Activated CD4-positive, alpha-beta T cell treated with anti-CD3 and anti-CD28 coated beads, Interleukin-2, amount 10 ng/mL, durations not matched to agents 24 days and 14 days (primary cell): ENCODE measurements at regions of chr3 and their contacts with region 1.

Region 1: DNA sequence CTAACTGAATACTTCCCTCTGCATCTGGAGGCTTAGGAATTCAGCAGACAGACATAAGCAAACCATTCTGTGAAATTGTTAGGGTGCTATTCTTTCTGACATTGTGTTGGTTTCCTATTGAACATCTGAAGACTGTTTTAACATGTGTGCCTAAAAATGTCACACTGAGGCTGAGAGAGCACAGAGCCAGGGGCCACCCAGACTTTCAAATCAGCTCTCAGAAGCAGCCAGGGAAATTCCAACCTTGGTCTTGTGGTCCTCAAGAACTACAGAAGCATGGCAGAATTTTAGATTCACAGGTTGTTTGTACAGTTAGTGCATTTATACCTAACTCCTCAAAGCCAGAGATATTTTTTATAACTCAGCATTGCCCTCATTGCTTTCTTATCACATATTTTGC is 929.2 kb upstream of the CFAP20DC start:
- DNase-seq: peak; percentile 81
- H3K4me3 Mint-ChIP-seq: peak overlapping the region; percentile 78
- H3K27ac Mint-ChIP-seq: peak overlapping the region; percentile 97
- H3K4me1 Mint-ChIP-seq: peaks cover 33% of the 10 kb centered on the region
- H3K27me3 Mint-ChIP-seq: no peaks in the 10 kb centered on the region

Region 2: DNA sequence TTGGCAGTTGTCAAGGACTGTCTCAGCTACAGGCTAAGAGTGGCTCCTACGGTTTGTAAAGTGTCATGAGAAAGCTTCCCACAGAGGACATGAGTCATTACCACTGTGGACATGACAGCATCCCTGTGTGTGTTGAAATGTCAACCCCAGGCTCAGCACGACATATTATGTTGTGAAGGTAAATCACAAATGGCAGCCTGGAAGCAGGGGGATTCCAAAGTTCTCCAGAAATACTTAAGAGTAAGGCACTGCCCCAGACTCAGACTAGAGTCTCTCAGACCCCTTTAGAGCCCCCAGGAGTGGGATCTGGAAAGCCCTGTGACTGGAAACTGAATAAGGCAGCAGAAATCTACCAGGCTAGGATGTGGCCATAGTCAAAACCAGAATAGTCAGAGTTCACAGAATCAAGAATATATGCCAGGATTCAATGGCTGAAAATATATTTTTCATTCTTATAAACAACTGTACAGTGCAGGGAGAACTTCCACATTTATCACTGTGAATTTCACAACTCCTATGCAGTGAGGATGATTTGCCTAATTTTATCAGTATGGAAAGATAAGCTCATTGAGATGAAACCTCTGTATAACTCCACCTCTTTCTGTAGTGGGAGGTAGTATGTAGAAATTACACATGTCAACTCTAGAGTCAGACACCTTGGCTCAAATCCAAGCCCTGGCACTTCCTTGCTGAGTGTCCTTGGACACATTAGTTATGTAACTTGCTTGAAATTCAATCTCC is 692.0 kb before region 1 on chr3:
- intact Hi-C with region 1: loop called (anchors 1 kb)
- DNase-seq: peak; percentile 74
- H3K4me3 Mint-ChIP-seq: peak overlapping the region; percentile 55
- H3K27ac Mint-ChIP-seq: peak overlapping the region; percentile 94
- H3K4me1 Mint-ChIP-seq: peaks cover 32% of the 10 kb centered on the region
- H3K27me3 Mint-ChIP-seq: no peaks in the 10 kb centered on the region

Region 3: GRCh38 chr3:59866076-59866475 is 112.9 kb before region 1 on chr3:
- intact Hi-C with region 1: loop called (anchors 1 kb)
- DNase-seq: no peak
- H3K4me3 Mint-ChIP-seq: no peak overlapping the region
- H3K27ac Mint-ChIP-seq: no peak overlapping the region
- H3K4me1 Mint-ChIP-seq: peaks cover 29% of the 10 kb centered on the region
- H3K27me3 Mint-ChIP-seq: no peaks in the 10 kb centered on the region

Region 4: DNA sequence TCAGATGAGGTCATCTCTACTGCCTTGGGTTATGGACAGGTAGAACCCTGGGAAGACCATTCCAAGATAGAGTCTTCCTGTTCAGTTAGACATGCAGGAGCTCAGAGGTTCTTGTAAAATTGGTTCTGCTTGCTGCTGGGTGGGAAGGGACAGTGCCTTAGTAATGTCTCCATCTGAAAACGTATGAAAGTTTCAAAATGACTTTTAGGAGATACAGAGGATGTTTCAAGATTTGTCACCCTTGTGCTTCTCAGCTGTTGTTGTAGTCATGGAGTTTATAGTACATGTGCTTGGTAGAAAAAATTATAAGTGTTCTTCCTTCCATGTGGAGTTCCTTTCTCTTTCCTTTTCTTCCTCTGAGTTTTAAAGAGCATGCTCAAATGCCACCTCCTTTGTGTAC is 44.0 kb before region 1 on chr3:
- intact Hi-C with region 1: loop called (anchors 1 kb)
- DNase-seq: peak; percentile 62
- H3K4me3 Mint-ChIP-seq: peak overlapping the region; percentile 58
- H3K27ac Mint-ChIP-seq: peak overlapping the region; percentile 88
- H3K4me1 Mint-ChIP-seq: peaks cover 28% of the 10 kb centered on the region
- H3K27me3 Mint-ChIP-seq: no peaks in the 10 kb centered on the region

Region 5: DNA sequence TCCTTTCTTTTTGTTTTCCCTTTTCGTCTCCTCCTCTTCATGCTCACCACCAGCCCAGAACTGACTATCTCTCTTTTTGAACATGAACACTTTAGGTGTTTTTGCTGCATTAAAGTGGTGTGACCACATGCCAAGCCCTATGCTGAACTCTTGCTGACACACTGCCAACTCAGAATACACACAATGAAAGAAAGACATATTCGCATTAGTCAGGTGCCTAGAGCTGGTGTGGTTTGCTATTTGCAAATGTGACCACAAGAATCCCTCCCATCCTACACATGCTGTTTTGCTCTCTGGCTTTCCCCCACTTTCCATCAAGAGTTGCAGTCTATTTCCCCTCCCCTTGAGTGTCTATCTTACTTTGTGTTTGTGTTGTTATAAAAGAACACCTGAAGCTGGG is 38.7 kb after region 1 on chr3:
- intact Hi-C with region 1: loop called (anchors 1 kb)
- DNase-seq: peak; percentile 89
- H3K4me3 Mint-ChIP-seq: peak overlapping the region; percentile 73
- H3K27ac Mint-ChIP-seq: peak overlapping the region; percentile 94
- H3K4me1 Mint-ChIP-seq: peaks cover 51% of the 10 kb centered on the region
- H3K27me3 Mint-ChIP-seq: no peaks in the 10 kb centered on the region

Region 6: GRCh38 chr3:60053526-60054265 is 74.7 kb after region 1 on chr3:
- intact Hi-C with region 1: loop called (anchors 1 kb)
- DNase-seq: peak; percentile 72
- H3K4me3 Mint-ChIP-seq: peak overlapping the region; percentile 61
- H3K27ac Mint-ChIP-seq: peak overlapping the region; percentile 93
- H3K4me1 Mint-ChIP-seq: peaks cover 78% of the 10 kb centered on the region
- H3K27me3 Mint-ChIP-seq: no peaks in the 10 kb centered on the region